Dendritic cell treated with granulocyte-macrophage colony-stimulating factor and Interleukin-4, amounts not matched to agents 40 ng/mL and 50 ng/mL, for 4 days (primary cell): ENCODE measurements at regions of chr18 and their contacts with region 1.

Region 1: GRCh38 chr18:48711651-48712486 is 173.0 kb downstream of the CTIF start:
- H3K4me3 Mint-ChIP-seq: no peak overlapping the region
- H3K27ac Mint-ChIP-seq: peak overlapping the region; percentile 2
- H3K4me1 Mint-ChIP-seq: peaks cover 67% of the 10 kb centered on the region
- H3K27me3 Mint-ChIP-seq: no peaks in the 10 kb centered on the region

Region 2: DNA sequence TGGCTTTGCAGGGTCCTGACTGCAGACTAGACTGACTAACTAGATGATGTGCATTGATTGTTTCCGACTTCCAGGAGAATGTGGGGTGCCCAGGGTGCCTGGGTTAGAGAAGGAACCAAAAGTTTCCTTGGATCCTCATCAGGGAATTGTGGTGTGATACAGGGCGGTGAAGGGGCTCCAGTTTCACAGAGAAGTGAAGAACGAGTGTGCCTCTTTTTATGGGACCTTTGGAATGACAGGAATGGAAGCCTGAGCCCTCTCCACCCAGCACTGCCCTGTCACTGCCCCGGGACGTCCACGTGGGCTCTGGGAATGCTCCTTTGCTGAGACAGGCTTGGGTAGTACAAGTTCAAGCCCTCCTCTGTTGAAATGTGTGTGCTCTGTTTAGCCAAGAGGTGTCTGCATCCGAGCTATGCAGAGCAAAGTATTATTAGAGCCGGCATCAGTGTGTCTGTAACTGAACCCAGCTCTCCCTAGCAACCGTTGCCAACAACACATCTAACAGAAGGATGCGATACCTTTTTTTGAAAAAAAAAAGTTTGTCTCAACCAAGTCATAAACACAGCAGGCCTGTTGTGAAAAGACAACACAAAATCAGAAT is 55.3 kb after region 1 on chr18:
- intact Hi-C with region 1: loop called (anchors 10 kb)
- H3K4me3 Mint-ChIP-seq: no peak overlapping the region
- H3K27ac Mint-ChIP-seq: no peak overlapping the region
- H3K4me1 Mint-ChIP-seq: peaks cover 21% of the 10 kb centered on the region
- H3K27me3 Mint-ChIP-seq: peaks cover 12% of the 10 kb centered on the region